H1 (cell line): ENCODE measurements at regions of chr13 and their contacts with region 1.

Region 1: GRCh38 chr13:59391696-59392095 is 772.0 kb downstream of the DIAPH3 start:
- DNase-seq: peak in 1 of 2 experiments; percentile 53
- H3K4me3 ChIP-seq: no peak overlapping the region
- H3K27ac ChIP-seq: no peak overlapping the region
- H3K4me1 ChIP-seq: no peaks in the 10 kb centered on the region
- H3K27me3 ChIP-seq: no peaks in the 10 kb centered on the region
- CTCF ChIP-seq: peak; percentile 6 to 82 (median 81)
- EP300 ChIP-seq: no peak
- POLR2A ChIP-seq: no peak
- RAD21 ChIP-seq: peak; percentile 91 to 95

Region 2: DNA sequence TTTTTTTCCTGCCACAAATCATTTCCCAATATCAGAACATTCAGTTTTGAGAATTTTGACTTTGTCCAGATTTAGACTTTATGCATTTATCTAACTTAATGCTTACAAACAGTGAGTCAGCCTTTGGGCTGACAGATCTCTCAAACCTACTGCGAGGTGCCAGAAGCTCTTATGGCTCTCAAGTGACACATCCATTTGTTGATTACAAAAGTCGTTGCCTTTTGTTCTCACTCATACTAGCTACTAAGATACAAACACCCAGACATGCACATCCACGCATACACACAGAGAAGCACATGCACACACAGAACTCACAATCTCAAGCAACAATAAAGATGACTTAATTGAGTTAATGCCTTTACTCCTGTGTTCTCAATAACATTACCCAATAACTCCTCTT is 375.4 kb before region 1 on chr13:
- CTCF ChIA-PET with region 1: no interaction called
- POLR2A ChIA-PET with region 1: no interaction called
- DNase-seq: no peak
- H3K4me3 ChIP-seq: no peak overlapping the region
- H3K27ac ChIP-seq: no peak overlapping the region
- H3K4me1 ChIP-seq: peaks cover 0 to 4% (median 4%) of the 10 kb centered on the region in 4 experiments; a peak in 3 of 7 replicates
- H3K27me3 ChIP-seq: peaks cover 0 to 1% (median 0%) of the 10 kb centered on the region in 4 experiments; a peak in 2 of 7 replicates
- CTCF ChIP-seq: no peak
- EP300 ChIP-seq: no peak
- POLR2A ChIP-seq: no peak
- RAD21 ChIP-seq: no peak

Region 3: DNA sequence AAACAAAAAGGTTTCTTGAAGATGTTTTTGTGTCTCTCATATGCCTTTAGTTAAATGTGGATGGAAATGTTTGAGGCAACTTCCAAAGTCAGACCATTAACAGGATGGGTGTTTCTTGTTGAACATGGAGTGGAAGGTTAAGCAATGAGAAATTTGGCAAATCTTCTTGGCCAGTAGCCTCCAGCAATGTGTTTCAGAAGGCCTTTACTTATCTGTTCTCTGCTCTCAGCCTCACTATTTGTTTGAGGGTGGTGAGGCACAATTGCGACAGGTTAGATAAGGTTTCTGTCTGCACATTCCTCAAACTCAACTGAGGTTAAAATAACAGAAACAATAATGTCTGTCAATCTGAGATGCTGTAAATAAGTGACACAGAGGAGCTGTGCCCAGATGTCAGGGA is 247.0 kb before region 1 on chr13:
- CTCF ChIA-PET with region 1: no interaction called
- POLR2A ChIA-PET with region 1: no interaction called
- DNase-seq: no peak
- H3K4me3 ChIP-seq: no peak overlapping the region
- H3K27ac ChIP-seq: no peak overlapping the region
- H3K4me1 ChIP-seq: no peaks in the 10 kb centered on the region
- H3K27me3 ChIP-seq: no peaks in the 10 kb centered on the region
- CTCF ChIP-seq: no peak
- EP300 ChIP-seq: no peak
- POLR2A ChIP-seq: no peak
- RAD21 ChIP-seq: no peak

Region 4: DNA sequence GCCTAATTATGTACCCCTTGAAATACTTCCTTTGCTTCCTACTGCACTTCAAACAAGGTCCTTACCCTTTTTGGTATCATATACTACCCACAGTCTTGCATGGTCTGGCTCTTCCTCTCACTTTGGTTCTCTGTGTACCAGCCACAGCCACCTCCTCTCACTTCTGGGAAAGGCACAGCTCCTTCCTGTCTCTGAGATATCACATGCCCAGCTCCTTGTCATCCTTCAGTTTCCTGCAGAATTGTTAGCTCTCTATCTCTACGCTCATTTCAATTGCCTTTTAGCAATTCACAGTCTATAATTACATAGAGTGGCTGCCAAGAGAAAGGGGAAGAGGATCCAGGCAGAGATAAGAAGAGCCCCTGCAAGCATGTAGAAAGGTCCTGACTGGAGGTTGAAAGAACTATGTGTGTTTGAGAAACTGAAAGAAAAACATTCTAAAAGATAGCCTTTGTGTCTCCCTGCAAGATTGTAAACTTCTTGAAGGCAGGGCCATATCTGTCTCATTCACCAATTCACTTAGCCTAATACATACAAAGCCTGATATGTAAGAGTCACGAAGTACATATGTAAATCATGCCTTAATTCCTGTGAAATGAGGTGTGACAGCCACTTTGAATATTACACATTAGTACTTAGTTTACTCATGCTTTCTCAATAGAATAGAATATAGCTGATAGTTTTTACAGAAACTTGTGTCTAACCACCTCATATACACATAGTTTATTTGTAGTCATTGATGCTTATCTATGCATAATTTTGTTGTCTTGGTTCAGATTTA is 161.0 kb before region 1 on chr13:
- CTCF ChIA-PET with region 1: no interaction called
- POLR2A ChIA-PET with region 1: no interaction called
- DNase-seq: no peak
- H3K4me3 ChIP-seq: no peak overlapping the region
- H3K27ac ChIP-seq: no peak overlapping the region
- H3K4me1 ChIP-seq: no peaks in the 10 kb centered on the region
- H3K27me3 ChIP-seq: no peaks in the 10 kb centered on the region
- CTCF ChIP-seq: no peak
- EP300 ChIP-seq: no peak
- POLR2A ChIP-seq: no peak
- RAD21 ChIP-seq: no peak

Region 5: GRCh38 chr13:59330764-59331163 is 60.9 kb before region 1 on chr13:
- CTCF ChIA-PET with region 1: no interaction called
- POLR2A ChIA-PET with region 1: no interaction called
- DNase-seq: no peak
- H3K4me3 ChIP-seq: no peak overlapping the region
- H3K27ac ChIP-seq: no peak overlapping the region
- H3K4me1 ChIP-seq: no peaks in the 10 kb centered on the region
- H3K27me3 ChIP-seq: no peaks in the 10 kb centered on the region
- CTCF ChIP-seq: no peak
- EP300 ChIP-seq: no peak
- POLR2A ChIP-seq: no peak
- RAD21 ChIP-seq: no peak

Region 6: DNA sequence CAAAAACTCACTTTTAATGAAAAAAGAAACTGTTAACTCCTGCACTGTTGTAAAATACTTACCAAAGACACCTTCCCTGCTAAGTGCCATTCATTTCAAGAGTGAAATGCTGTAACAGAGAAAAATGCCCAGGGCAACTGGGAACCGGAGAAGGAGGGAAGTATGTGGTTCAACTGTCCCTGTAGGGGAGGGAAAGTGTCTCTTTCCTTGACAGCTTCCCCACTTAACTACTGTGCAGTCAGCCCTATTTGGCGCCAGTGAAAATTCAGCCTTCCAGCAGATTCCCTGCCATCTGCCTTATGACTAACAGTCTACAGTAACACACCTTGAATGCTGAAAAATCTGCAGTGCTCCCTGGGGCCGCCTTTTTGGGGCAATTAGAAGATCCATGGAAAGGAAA is 17.0 kb before region 1 on chr13:
- CTCF ChIA-PET with region 1: interaction called, 30 read pairs
- POLR2A ChIA-PET with region 1: no interaction called
- DNase-seq: no peak
- H3K4me3 ChIP-seq: no peak overlapping the region
- H3K27ac ChIP-seq: no peak overlapping the region
- H3K4me1 ChIP-seq: no peaks in the 10 kb centered on the region
- H3K27me3 ChIP-seq: no peaks in the 10 kb centered on the region
- CTCF ChIP-seq: no peak
- EP300 ChIP-seq: no peak
- POLR2A ChIP-seq: no peak
- RAD21 ChIP-seq: no peak

Region 7: GRCh38 chr13:59442944-59443486 is 51.3 kb after region 1 on chr13:
- CTCF ChIA-PET with region 1: interaction called, 16 read pairs
- POLR2A ChIA-PET with region 1: no interaction called
- DNase-seq: no peak
- H3K4me3 ChIP-seq: no peak overlapping the region
- H3K27ac ChIP-seq: no peak overlapping the region
- H3K4me1 ChIP-seq: peaks cover 2 to 9% (median 5%) of the 10 kb centered on the region in 4 experiments; a peak in 4 of 7 replicates
- H3K27me3 ChIP-seq: no peaks in the 10 kb centered on the region; a peak in 1 of 7 replicates
- CTCF ChIP-seq: no peak
- EP300 ChIP-seq: no peak
- POLR2A ChIP-seq: no peak
- RAD21 ChIP-seq: no peak

Region 8: GRCh38 chr13:59477011-59477410 is 85.3 kb after region 1 on chr13:
- CTCF ChIA-PET with region 1: interaction called, 18 read pairs
- POLR2A ChIA-PET with region 1: no interaction called
- DNase-seq: no peak
- H3K4me3 ChIP-seq: no peak overlapping the region
- H3K27ac ChIP-seq: no peak overlapping the region
- H3K4me1 ChIP-seq: peaks cover 0 to 17% (median 13%) of the 10 kb centered on the region in 4 experiments; a peak in 5 of 7 replicates
- H3K27me3 ChIP-seq: no peaks in the 10 kb centered on the region
- CTCF ChIP-seq: peak; percentile 31 to 63 (median 49)
- EP300 ChIP-seq: no peak
- POLR2A ChIP-seq: no peak
- RAD21 ChIP-seq: peak; percentile 51 to 63; a peak in 3 of 4 replicates

Region 9: GRCh38 chr13:59490651-59491050 is 99.0 kb after region 1 on chr13:
- CTCF ChIA-PET with region 1: interaction called, 14 read pairs
- POLR2A ChIA-PET with region 1: no interaction called
- DNase-seq: no peak
- H3K4me3 ChIP-seq: no peak overlapping the region
- H3K27ac ChIP-seq: no peak overlapping the region
- H3K4me1 ChIP-seq: no peaks in the 10 kb centered on the region; a peak in 1 of 7 replicates
- H3K27me3 ChIP-seq: no peaks in the 10 kb centered on the region
- CTCF ChIP-seq: no peak
- EP300 ChIP-seq: no peak
- POLR2A ChIP-seq: no peak
- RAD21 ChIP-seq: no peak

Region 10: GRCh38 chr13:59587971-59588716 is 196.4 kb after region 1 on chr13:
- CTCF ChIA-PET with region 1: interaction called, 10 read pairs
- POLR2A ChIA-PET with region 1: no interaction called
- DNase-seq: no peak
- H3K4me3 ChIP-seq: peak overlapping the region in 1 of 4 experiments; percentile 38; a peak in 3 of 8 replicates
- H3K27ac ChIP-seq: no peak overlapping the region
- H3K4me1 ChIP-seq: peaks cover 2 to 30% (median 12%) of the 10 kb centered on the region in 4 experiments; a peak in 6 of 7 replicates
- H3K27me3 ChIP-seq: peaks cover 0 to 1% (median 0%) of the 10 kb centered on the region in 4 experiments; a peak in 3 of 7 replicates
- CTCF ChIP-seq: no peak
- EP300 ChIP-seq: peak in 1 of 2 experiments; percentile 48; a peak in 1 of 3 replicates
- POLR2A ChIP-seq: no peak
- RAD21 ChIP-seq: no peak

Region 11: DNA sequence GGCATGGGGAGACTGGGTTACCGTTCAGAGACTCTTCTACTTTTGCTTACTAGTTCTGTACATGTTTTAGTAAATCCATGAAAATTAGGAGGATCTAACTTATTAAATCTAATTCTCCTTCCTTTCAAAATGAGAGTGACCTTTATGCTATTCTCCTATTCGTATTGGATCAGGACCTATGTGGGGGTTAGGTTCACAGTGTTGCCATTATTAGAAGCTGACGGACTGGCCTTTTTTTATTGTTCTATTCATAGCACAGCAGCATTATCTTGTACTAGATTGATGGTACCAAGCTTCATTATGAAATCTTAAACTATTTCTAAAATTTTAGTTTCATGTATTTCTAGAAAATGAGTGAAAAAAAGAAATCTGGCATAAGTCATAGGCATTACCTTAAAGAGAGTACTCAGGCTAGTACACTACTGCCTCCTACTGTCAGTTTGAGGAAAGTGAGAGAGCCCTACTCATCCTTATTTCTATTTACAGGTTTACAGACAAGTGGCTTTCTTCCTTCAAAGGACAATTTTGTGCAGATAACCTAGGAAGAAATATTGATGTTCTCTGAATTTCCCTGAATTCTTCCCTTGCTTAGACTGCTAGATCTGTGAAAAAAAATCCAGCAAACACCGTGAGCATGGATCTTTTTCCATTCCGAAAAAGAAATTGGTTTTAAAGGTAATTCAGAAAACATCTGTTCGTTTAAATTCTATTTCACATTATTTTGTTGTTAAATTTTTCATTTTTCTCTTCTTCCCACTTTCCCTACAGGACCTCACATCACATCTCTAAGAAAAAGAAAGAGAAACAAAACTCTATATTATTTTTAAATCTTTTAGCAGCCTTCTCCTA is 286.5 kb after region 1 on chr13:
- CTCF ChIA-PET with region 1: interaction called, 48 read pairs
- POLR2A ChIA-PET with region 1: no interaction called
- DNase-seq: no peak
- H3K4me3 ChIP-seq: no peak overlapping the region
- H3K27ac ChIP-seq: no peak overlapping the region
- H3K4me1 ChIP-seq: peaks cover 0 to 10% (median 3%) of the 10 kb centered on the region in 4 experiments; a peak in 4 of 7 replicates
- H3K27me3 ChIP-seq: no peaks in the 10 kb centered on the region
- CTCF ChIP-seq: peak in 2 of 3 experiments; percentile 64 to 87; a peak in 2 of 4 replicates
- EP300 ChIP-seq: no peak
- POLR2A ChIP-seq: no peak
- RAD21 ChIP-seq: peak; percentile 94 to 95